ENCODE measurements at regions of chr7 and their contacts with region 1.

Region 1: GRCh38 chr7:31744294-31744874 is 57.4 kb downstream of the PPP1R17 start:
- DNase-seq: peak; percentile 36 to 86 (median 68)
- H3K4me3 ChIP-seq: no peak overlapping the region
- H3K27ac ChIP-seq: no peak overlapping the region
- H3K4me1 ChIP-seq: no peaks in the 10 kb centered on the region
- H3K27me3 ChIP-seq: no peaks in the 10 kb centered on the region
- CTCF ChIP-seq: peak; percentile 76 to 91 (median 88)
- POLR2A ChIP-seq: no peak

Region 2: GRCh38 chr7:31432836-31433340 is 311.5 kb before region 1 on chr7:
- intact Hi-C with region 1: no loop called
- DNase-seq: no peak
- H3K4me3 ChIP-seq: no peak overlapping the region
- H3K27ac ChIP-seq: no peak overlapping the region
- H3K4me1 ChIP-seq: no peaks in the 10 kb centered on the region
- H3K27me3 ChIP-seq: no peaks in the 10 kb centered on the region
- CTCF ChIP-seq: no peak
- POLR2A ChIP-seq: no peak

Region 3: GRCh38 chr7:32204361-32205018 is 460.1 kb after region 1 on chr7:
- intact Hi-C with region 1: loop called (anchors 5 to 10 kb)
- DNase-seq: peak; percentile 57 to 87 (median 62)
- H3K4me3 ChIP-seq: peak overlapping the region in 1 of 4 donors; percentile 2
- H3K27ac ChIP-seq: no peak overlapping the region
- H3K4me1 ChIP-seq: no peaks in the 10 kb centered on the region
- H3K27me3 ChIP-seq: no peaks in the 10 kb centered on the region
- CTCF ChIP-seq: peak; percentile 38 to 92 (median 84)
- POLR2A ChIP-seq: no peak

Region 4: DNA sequence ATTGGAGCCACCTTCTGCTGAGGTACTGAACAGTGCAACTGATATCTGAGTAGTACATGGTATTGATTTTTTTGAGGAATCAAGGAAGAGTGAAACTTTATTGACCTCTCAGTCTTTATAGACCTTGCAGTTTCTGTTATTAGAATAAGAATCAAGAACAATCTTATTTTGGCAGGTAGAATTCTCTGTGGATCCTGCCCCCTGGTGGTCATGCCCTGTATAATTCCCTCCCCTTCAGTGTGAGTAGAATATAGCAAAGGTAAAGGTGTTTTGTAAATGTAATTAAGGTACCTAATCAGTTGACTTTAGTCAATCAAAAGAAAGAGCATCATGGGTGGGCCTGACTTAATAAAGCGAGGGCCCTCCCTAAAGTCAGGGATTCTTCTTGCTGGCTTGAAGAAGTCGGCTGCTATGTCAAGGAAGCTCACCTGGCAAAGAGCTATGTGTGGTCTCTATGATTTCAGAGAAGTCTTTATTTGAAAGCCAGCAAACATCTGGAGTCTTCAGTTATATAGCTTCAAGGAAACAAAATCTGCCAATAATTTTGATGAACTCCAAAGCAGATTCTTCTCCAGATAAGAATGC is 603.0 kb after region 1 on chr7:
- intact Hi-C with region 1: loop called in 1 of 2 experiments (anchors 10 kb)
- DNase-seq: peak in 3 of 7 donors; percentile 25 to 62 (median 35)
- H3K4me3 ChIP-seq: no peak overlapping the region
- H3K27ac ChIP-seq: no peak overlapping the region
- H3K4me1 ChIP-seq: no peaks in the 10 kb centered on the region
- H3K27me3 ChIP-seq: no peaks in the 10 kb centered on the region
- CTCF ChIP-seq: peak in 5 of 6 experiments; percentile 38 to 60 (median 56)
- POLR2A ChIP-seq: no peak

Region 5: GRCh38 chr7:32774541-32774951 is 1030.2 kb after region 1 on chr7:
- intact Hi-C with region 1: no loop called
- DNase-seq: no peak
- H3K4me3 ChIP-seq: no peak overlapping the region
- H3K27ac ChIP-seq: no peak overlapping the region
- H3K4me1 ChIP-seq: no peaks in the 10 kb centered on the region
- H3K27me3 ChIP-seq: no peaks in the 10 kb centered on the region
- CTCF ChIP-seq: no peak
- POLR2A ChIP-seq: no peak

Measured in adrenal gland (tissue), 19 donors.